SK-N-SH (cell line): ENCODE measurements at regions of chr12 and their contacts with region 1.

Region 1: DNA sequence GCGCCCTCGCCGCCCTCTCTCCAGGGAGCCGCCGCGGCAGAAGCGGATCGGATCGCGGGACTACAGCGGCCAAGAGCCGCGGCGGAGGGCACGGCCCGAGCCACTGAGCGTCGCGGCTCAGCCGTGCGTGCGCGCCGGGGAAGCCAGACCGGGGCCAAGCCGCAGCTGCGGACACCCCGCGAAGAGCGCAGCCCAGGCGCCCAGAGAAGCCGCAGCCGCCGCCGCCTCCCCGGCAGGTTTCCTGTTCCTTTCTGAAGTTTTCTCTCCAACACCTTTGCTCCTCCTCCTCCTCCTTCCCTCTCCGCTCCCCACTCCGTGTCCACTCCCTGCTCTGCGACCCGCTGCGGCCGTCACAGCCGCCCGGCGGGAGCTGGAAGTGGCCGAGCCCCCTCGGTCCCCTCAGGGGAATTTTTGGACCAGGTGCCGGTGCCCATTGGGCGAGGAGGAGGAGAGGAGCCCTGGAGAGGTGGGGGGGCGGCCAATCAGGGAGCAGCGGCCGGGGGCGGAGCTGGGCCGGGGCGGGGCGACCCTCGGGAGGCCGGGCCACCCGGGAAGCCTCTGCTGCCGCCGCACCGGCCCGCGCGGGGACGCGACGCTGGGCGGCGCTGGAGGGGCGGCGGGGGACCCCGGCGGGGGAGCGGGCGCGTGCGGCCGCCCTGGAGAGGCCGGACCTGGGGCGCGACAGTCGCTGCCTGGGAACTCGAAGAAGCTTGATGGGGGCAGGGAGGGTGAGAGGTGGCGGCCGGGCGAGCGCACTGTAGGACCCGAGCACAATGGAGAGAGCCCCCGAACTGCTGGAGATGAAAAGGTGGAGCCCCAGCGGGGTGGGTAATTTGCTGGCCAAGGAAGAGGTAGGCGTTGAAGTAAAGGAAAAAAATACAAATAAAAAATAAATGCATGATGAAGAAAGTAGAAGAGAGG is at the start of gene ITPR2:
- DNase-seq: peak; percentile 100
- H3K4me3 ChIP-seq: peak within 1 kb of the TSS; percentile 76 to 92
- H3K27ac ChIP-seq: peak within 1 kb of the TSS; percentile 92 to 97
- H3K4me1 ChIP-seq: peaks cover 11 to 16% of the 10 kb centered on the region in 2 experiments; a peak in 3 of 4 replicates
- H3K27me3 ChIP-seq: no peaks in the 10 kb centered on the region
- CTCF ChIP-seq: peak; percentile 36
- EP300 ChIP-seq: peak in 1 of 2 experiments; percentile 6; a peak in 1 of 4 replicates
- RAD21 ChIP-seq: peak; percentile 41
- polyA plus RNA-seq, gene ITPR2: 2.3 and 3.0 TPM in 2 replicates

Region 2: GRCh38 chr12:26177283-26177682 is 655.8 kb before region 1 on chr12:
- CTCF ChIA-PET with region 1: no interaction called
- POLR2A ChIA-PET with region 1: no interaction called
- DNase-seq: no peak
- H3K4me3 ChIP-seq: no peak overlapping the region
- H3K27ac ChIP-seq: no peak overlapping the region
- H3K4me1 ChIP-seq: no peaks in the 10 kb centered on the region
- H3K27me3 ChIP-seq: no peaks in the 10 kb centered on the region
- CTCF ChIP-seq: no peak
- EP300 ChIP-seq: no peak
- RAD21 ChIP-seq: no peak

Region 3: GRCh38 chr12:26728205-26729050 is 104.7 kb before region 1 on chr12:
- CTCF ChIA-PET with region 1: no interaction called
- POLR2A ChIA-PET with region 1: no interaction called
- DNase-seq: no peak
- H3K4me3 ChIP-seq: no peak overlapping the region
- H3K27ac ChIP-seq: no peak overlapping the region
- H3K4me1 ChIP-seq: peaks cover 10 to 12% of the 10 kb centered on the region in 2 experiments
- H3K27me3 ChIP-seq: no peaks in the 10 kb centered on the region
- CTCF ChIP-seq: no peak
- EP300 ChIP-seq: no peak
- RAD21 ChIP-seq: no peak

Region 4: GRCh38 chr12:26799741-26800140 is 33.3 kb before region 1 on chr12:
- CTCF ChIA-PET with region 1: no interaction called
- POLR2A ChIA-PET with region 1: no interaction called
- DNase-seq: no peak
- H3K4me3 ChIP-seq: no peak overlapping the region
- H3K27ac ChIP-seq: no peak overlapping the region
- H3K4me1 ChIP-seq: peaks cover 3 to 10% of the 10 kb centered on the region in 2 experiments; a peak in 3 of 4 replicates
- H3K27me3 ChIP-seq: no peaks in the 10 kb centered on the region
- CTCF ChIP-seq: no peak
- EP300 ChIP-seq: no peak
- RAD21 ChIP-seq: no peak

Region 5: GRCh38 chr12:26845057-26845666 is 12.1 kb after region 1 on chr12:
- CTCF ChIA-PET with region 1: interaction called, 20 read pairs
- POLR2A ChIA-PET with region 1: interaction called, 10 read pairs
- DNase-seq: peak; percentile 50
- H3K4me3 ChIP-seq: no peak overlapping the region; a peak in 1 of 4 replicates
- H3K27ac ChIP-seq: peak overlapping the region in 1 of 2 experiments; percentile 91; a peak in 1 of 4 replicates
- H3K4me1 ChIP-seq: peaks cover 0 to 7% of the 10 kb centered on the region in 2 experiments; a peak in 2 of 4 replicates
- H3K27me3 ChIP-seq: no peaks in the 10 kb centered on the region
- CTCF ChIP-seq: peak; percentile 58
- EP300 ChIP-seq: no peak
- RAD21 ChIP-seq: peak; percentile 55

Region 6: GRCh38 chr12:26853303-26854030 is 20.4 kb after region 1 on chr12:
- CTCF ChIA-PET with region 1: interaction called, 21 read pairs
- POLR2A ChIA-PET with region 1: no interaction called
- DNase-seq: peak; percentile 63
- H3K4me3 ChIP-seq: no peak overlapping the region; a peak in 1 of 4 replicates
- H3K27ac ChIP-seq: peak overlapping the region in 1 of 2 experiments; percentile 30; a peak in 1 of 4 replicates
- H3K4me1 ChIP-seq: peaks cover 4 to 12% of the 10 kb centered on the region in 2 experiments; a peak in 3 of 4 replicates
- H3K27me3 ChIP-seq: no peaks in the 10 kb centered on the region
- CTCF ChIP-seq: peak; percentile 91
- EP300 ChIP-seq: no peak
- RAD21 ChIP-seq: peak; percentile 90

Region 7: GRCh38 chr12:26870491-26871419 is 37.7 kb after region 1 on chr12:
- CTCF ChIA-PET with region 1: interaction called, 16 read pairs
- POLR2A ChIA-PET with region 1: interaction called, 4 read pairs
- DNase-seq: peak; percentile 53
- H3K4me3 ChIP-seq: no peak overlapping the region
- H3K27ac ChIP-seq: peak overlapping the region in 1 of 2 experiments; percentile 84; a peak in 2 of 4 replicates
- H3K4me1 ChIP-seq: peaks cover 0 to 23% of the 10 kb centered on the region in 2 experiments; a peak in 2 of 4 replicates
- H3K27me3 ChIP-seq: no peaks in the 10 kb centered on the region
- CTCF ChIP-seq: no peak
- EP300 ChIP-seq: peak in 1 of 2 experiments; percentile 79; a peak in 2 of 4 replicates
- RAD21 ChIP-seq: peak; percentile 9; the same call in 1 of the 2 replicates

Region 8: DNA sequence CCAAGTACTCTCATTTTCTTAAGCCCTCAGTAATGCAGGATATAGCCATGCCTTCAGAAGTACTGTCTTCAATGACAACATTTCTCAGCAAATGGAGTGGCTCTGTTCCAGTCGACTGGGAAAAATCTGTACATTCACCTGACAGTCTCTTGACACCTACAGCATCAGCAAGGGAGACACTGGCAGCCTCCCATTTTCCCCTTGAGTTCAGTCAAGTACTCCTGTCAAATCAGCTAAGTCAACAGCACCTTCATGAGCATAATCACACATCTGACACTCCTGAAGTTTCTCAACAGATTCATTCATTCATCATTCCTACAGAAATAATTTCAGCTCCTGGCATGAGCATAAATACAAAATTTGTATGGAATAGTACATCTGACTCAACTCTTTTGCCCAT is 58.6 kb after region 1 on chr12:
- CTCF ChIA-PET with region 1: interaction called, 27 read pairs
- POLR2A ChIA-PET with region 1: no interaction called
- DNase-seq: no peak
- H3K4me3 ChIP-seq: no peak overlapping the region
- H3K27ac ChIP-seq: no peak overlapping the region
- H3K4me1 ChIP-seq: no peaks in the 10 kb centered on the region
- H3K27me3 ChIP-seq: no peaks in the 10 kb centered on the region
- CTCF ChIP-seq: no peak
- EP300 ChIP-seq: no peak
- RAD21 ChIP-seq: no peak

Region 9: DNA sequence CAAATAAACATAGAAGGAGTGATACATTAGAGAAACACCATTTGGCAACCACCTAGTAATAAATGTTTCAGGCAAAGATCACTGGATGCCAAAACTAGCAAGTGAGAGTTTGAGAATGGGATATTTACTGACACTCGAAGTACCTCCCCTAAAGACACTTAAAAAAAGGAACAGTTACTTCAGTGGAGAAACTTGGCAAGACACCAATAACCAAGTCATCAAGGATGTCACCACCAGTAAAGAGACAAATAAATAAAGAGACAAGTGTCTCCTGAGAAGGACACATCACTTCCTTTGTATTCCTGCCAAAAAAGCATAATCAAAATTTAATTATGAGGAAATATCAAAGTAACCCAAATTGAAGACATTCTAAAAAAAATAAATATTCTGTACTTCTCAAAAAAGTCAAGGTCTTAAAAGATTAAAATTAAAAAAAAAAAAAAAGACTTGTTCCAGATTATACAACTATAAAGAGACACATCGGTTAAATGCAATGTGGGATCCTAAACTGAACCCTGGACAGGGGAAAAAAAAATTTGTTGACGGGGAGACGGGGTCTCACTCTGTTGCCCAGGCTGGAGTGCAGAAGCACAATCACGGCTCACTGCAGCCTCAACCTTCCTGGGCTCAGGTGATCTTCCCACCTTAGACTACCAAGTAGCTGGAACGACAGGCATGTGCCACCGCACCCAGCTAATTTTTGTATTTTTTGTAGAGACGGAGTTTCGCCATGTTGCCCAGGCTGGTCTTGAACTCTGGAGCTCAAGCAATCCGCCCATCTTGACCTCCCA is 154.7 kb after region 1 on chr12:
- CTCF ChIA-PET with region 1: no interaction called
- POLR2A ChIA-PET with region 1: no interaction called
- DNase-seq: no peak
- H3K4me3 ChIP-seq: no peak overlapping the region
- H3K27ac ChIP-seq: no peak overlapping the region
- H3K4me1 ChIP-seq: no peaks in the 10 kb centered on the region
- H3K27me3 ChIP-seq: no peaks in the 10 kb centered on the region
- CTCF ChIP-seq: no peak
- EP300 ChIP-seq: no peak
- RAD21 ChIP-seq: no peak

Region 10: DNA sequence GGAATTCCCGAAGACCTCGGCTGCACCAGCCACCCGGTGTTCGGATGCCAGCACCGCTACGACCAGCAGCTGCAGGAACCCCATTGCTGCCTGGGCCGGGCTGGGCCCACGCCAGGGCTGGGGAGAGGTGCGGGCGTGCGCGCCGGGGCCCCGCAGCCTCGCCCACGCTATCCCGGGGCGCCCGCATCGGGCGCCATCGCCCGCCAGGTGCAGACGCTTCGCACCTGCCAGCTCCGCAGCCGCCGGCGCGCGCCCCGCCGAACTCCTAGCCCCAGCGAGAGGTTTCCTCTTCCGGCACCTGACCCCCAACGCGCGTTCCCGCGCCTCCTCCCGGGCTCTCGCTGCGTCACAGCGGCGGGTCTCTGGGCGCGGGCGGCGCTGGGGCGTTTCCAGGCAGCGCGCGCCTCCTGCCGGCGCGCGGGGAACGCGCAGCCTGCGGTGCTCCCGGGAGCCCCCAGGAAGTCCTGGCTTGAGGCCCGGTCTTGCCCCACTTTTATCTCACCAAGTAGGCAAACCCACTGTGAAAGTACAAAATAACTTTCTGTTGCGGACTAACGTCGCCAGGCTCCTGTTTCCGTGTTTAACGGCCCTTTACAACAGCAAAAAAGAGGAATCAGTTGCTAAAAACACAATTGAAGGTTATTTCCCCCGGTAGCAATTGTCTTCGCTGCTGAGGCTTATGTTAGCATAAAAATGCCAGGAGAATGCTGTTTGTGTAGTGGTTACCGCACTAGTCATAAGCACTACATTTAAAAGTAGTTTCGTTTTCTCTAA is 181.2 kb after region 1 on chr12 and contains the start of gene TM7SF3:
- CTCF ChIA-PET with region 1: interaction called, 18 read pairs
- POLR2A ChIA-PET with region 1: interaction called, 4 read pairs
- DNase-seq: peak; percentile 96
- H3K4me3 ChIP-seq: peak within 1 kb of the TSS; percentile 84 to 99
- H3K27ac ChIP-seq: peak within 1 kb of the TSS; percentile 66 to 92
- H3K4me1 ChIP-seq: peaks cover 0 to 19% of the 10 kb centered on the region in 2 experiments; a peak in 3 of 4 replicates
- H3K27me3 ChIP-seq: no peaks in the 10 kb centered on the region
- CTCF ChIP-seq: peak; percentile 88
- EP300 ChIP-seq: no peak
- RAD21 ChIP-seq: peak; percentile 89
- polyA plus RNA-seq, gene TM7SF3: 72.1 and 121 TPM in 2 replicates